Head of caudate nucleus (tissue), 42 donors: ENCODE measurements at regions of chr19 and their contacts with region 1.

Region 1: DNA sequence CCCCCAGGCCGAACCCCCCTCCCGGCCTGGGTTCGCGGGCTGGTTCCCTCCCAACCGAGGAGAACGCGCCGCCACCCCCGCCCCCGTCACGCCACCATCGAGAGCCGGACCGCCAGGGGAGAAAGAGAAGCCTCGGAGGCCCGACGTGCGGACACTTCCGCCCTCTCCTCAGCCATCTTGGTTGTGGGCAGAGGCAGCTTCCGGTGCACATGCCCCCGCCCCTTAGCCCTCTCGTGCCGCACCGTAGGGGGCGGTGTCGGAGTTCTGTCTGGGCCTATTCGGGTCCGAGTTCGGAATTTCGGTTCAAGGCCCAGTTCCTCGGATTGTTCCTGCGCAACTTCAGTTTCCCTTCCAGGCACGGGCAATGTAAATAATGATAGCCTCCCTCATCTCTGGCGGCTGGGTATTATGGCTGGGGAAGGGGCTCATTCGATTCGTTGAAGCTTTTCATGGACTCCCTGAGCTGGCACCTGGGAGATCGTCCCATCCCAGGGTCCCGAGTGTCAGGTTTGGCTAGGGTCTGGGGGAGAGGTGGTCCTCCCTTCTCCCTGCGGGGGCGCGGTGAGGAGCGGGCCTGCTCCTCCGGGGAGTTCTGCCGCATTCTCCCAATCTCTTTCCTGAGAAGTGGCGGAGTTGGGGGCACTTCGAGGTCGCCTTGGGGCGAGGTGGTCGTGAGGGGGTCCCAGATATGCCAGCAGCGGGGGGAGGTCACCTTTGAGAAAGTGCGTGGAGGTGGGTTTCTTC is at the starts of genes IER2 and STX10:
- DNase-seq: peak; percentile 90 to 98 (median 97)

Region 2: GRCh38 chr19:13117772-13118423 is 32.5 kb before region 1 on chr19 and contains the start of gene NACC1:
- intact Hi-C with region 1: loop called (anchors 2 kb)
- DNase-seq: peak; percentile 75 to 97 (median 93)

Region 3: DNA sequence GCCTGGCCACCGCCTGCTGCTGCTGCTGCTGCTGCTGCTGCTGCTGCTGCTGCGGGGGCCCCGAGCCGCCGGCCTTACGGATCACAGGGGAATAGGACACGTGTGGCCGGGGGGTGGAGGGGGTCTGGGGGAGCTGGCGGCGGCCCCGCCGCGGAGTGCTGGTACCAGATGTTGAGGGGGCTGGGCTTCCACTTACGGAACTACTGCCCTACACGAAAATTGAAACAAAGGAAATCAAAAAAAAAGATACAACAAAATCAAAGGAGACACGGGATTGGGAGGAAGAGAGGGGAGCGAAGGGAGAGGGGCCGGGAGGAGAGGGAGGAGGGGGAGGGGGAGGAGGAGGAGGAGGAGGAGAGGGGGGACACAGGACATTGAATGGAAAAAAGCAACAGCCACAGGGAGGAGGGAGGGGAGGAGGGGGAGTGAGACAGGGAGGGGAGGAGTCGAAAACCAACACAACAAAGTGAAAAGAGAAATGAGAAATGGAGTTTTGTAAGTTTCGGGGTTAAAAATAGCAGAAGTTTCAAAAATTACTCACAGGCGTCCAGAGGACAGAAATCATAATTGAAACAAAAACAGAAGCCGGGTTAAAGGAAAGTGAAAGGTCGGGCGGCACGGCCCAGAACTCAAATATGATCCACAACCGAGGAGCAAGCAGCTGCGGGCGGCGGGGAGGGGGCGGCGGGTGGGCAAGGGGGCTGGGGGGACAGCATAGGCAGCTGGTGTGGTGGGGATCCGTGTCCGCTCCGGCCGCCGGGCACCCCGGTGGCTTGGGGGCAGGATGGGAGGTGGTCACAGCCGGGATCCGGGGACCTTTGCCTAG is 57.7 kb after region 1 on chr19:
- intact Hi-C with region 1: no loop called
- DNase-seq: peak in 10 of 42 donors; percentile 2 to 53 (median 18)